Naive thymus-derived CD4-positive, alpha-beta T cell (primary cell): ENCODE measurements at regions of chr2 and their contacts with region 1.

Region 1: DNA sequence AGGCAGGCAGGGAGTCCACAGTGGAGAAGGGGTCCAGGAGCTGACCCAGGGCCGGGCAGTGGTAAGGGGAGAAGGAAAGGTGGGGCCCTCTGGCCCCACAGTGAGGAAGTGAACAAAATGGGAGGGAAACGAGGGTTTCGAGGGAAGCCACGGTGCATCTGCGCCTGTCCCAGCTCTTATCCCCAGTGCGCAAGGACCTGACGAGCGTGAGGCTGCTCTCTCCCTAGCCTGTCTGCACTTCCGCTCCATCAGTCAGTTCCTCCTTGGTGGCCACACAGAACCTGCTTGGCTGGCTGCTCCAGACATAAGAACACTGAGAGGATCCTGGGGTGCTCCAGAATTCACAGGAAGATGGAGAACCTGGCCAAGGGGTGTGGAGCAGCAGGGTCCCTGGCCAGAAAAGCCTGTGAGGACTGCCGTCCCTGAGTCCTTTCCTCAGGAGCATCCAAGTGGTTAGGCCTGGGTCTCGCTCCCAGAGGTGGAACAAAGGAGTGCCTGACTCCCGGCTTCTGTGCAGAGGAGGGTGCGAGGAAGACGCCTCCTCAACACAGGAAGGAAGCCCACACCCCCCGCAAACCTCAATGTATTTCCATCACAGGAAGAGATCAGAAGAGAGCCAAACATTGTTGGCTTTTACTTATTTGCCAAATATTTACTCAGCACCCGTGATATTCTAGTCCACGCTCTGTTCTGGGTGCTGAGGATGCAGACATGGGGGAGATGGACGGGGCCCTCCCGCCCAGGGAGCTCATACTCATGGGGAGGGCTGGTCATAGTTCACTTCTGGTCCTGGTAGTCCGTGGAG is 43.7 kb upstream of the SEMA4C start:
- DNase-seq: peak in 8 of 9 donors; percentile 55 to 78 (median 72)
- ATAC-seq: peak; percentile 85
- H3K4me3 ChIP-seq: peak overlapping the region; percentile 68
- H3K4me3 Mint-ChIP-seq: peak overlapping the region; percentile 79 to 94 (median 88)
- H3K27ac ChIP-seq: peak overlapping the region; percentile 61
- H3K27ac Mint-ChIP-seq: peak overlapping the region; percentile 90 to 100 (median 97)
- H3K4me1 ChIP-seq: peaks cover 33 to 38% of the 10 kb centered on the region in 2 donors
- H3K4me1 Mint-ChIP-seq: peaks cover 45 to 96% (median 89%) of the 10 kb centered on the region in 7 donors
- H3K27me3 ChIP-seq: no peaks in the 10 kb centered on the region
- H3K27me3 Mint-ChIP-seq: peaks cover 0 to 7% (median 0%) of the 10 kb centered on the region in 5 donors

Region 2: GRCh38 chr2:96449637-96450036 is 464.0 kb before region 1 on chr2:
- CTCF ChIA-PET with region 1: no interaction called
- POLR2A ChIA-PET with region 1: no interaction called
- intact Hi-C with region 1: no loop called
- DNase-seq: no peak
- ATAC-seq: no peak
- H3K4me3 ChIP-seq: no peak overlapping the region
- H3K4me3 Mint-ChIP-seq: no peak overlapping the region
- H3K27ac ChIP-seq: no peak overlapping the region
- H3K27ac Mint-ChIP-seq: no peak overlapping the region
- H3K4me1 ChIP-seq: no peaks in the 10 kb centered on the region
- H3K4me1 Mint-ChIP-seq: peaks cover 0 to 1% (median 0%) of the 10 kb centered on the region in 7 donors
- H3K27me3 ChIP-seq: no peaks in the 10 kb centered on the region
- H3K27me3 Mint-ChIP-seq: peaks cover 0 to 5% (median 0%) of the 10 kb centered on the region in 5 donors

Region 3: GRCh38 chr2:96868555-96869280 is 44.9 kb before region 1 on chr2:
- CTCF ChIA-PET with region 1: interaction called, 6 read pairs
- POLR2A ChIA-PET with region 1: interaction called, 76 read pairs
- intact Hi-C with region 1: loop called (anchors 1 kb)
- DNase-seq: peak in 8 of 9 donors; percentile 37 to 71 (median 56)
- ATAC-seq: peak; percentile 37
- H3K4me3 ChIP-seq: peak overlapping the region; percentile 81
- H3K4me3 Mint-ChIP-seq: peak overlapping the region; percentile 81 to 95 (median 88)
- H3K27ac ChIP-seq: peak overlapping the region; percentile 84
- H3K27ac Mint-ChIP-seq: peak overlapping the region in 8 of 9 donors; percentile 75 to 92 (median 85)
- H3K4me1 ChIP-seq: peaks cover 24 to 32% of the 10 kb centered on the region in 2 donors
- H3K4me1 Mint-ChIP-seq: peaks cover 23 to 52% (median 42%) of the 10 kb centered on the region in 7 donors
- H3K27me3 ChIP-seq: no peaks in the 10 kb centered on the region
- H3K27me3 Mint-ChIP-seq: peaks cover 0 to 12% (median 0%) of the 10 kb centered on the region in 5 donors

Region 4: GRCh38 chr2:96895726-96896651 is 17.6 kb before region 1 on chr2:
- CTCF ChIA-PET with region 1: interaction called, 4 read pairs
- POLR2A ChIA-PET with region 1: interaction called, 38 read pairs
- intact Hi-C with region 1: loop called in 1 of 2 experiments (anchors 2 kb)
- DNase-seq: no peak
- ATAC-seq: peak; percentile 41
- H3K4me3 ChIP-seq: no peak overlapping the region
- H3K4me3 Mint-ChIP-seq: peak overlapping the region in 7 of 10 donors; percentile 34 to 72 (median 52)
- H3K27ac ChIP-seq: no peak overlapping the region
- H3K27ac Mint-ChIP-seq: peak overlapping the region; percentile 56 to 88 (median 81)
- H3K4me1 ChIP-seq: peaks cover 24 to 47% of the 10 kb centered on the region in 2 donors
- H3K4me1 Mint-ChIP-seq: peaks cover 44 to 75% (median 68%) of the 10 kb centered on the region in 7 donors
- H3K27me3 ChIP-seq: no peaks in the 10 kb centered on the region
- H3K27me3 Mint-ChIP-seq: no peaks in the 10 kb centered on the region

Region 5: GRCh38 chr2:96940001-96940615 is 26.5 kb after region 1 on chr2:
- CTCF ChIA-PET with region 1: interaction called, 3 read pairs
- POLR2A ChIA-PET with region 1: interaction called, 54 read pairs
- intact Hi-C with region 1: loop called in 1 of 2 experiments (anchors 1 kb)
- DNase-seq: no peak
- ATAC-seq: no peak
- H3K4me3 ChIP-seq: no peak overlapping the region
- H3K4me3 Mint-ChIP-seq: peak overlapping the region in 8 of 10 donors; percentile 50 to 92 (median 78)
- H3K27ac ChIP-seq: no peak overlapping the region
- H3K27ac Mint-ChIP-seq: peak overlapping the region in 8 of 9 donors; percentile 43 to 94 (median 80)
- H3K4me1 ChIP-seq: peaks cover 19 to 25% of the 10 kb centered on the region in 2 donors
- H3K4me1 Mint-ChIP-seq: peaks cover 24 to 55% (median 46%) of the 10 kb centered on the region in 7 donors
- H3K27me3 ChIP-seq: no peaks in the 10 kb centered on the region
- H3K27me3 Mint-ChIP-seq: peaks cover 0 to 10% (median 0%) of the 10 kb centered on the region in 5 donors

Region 6: GRCh38 chr2:96951093-96951654 is 37.6 kb after region 1 on chr2:
- CTCF ChIA-PET with region 1: interaction called, 8 read pairs
- POLR2A ChIA-PET with region 1: interaction called, 13 read pairs
- intact Hi-C with region 1: loop called (anchors 1 to 5 kb)
- DNase-seq: peak; percentile 68 to 85 (median 80)
- ATAC-seq: peak; percentile 93
- H3K4me3 ChIP-seq: no peak overlapping the region
- H3K4me3 Mint-ChIP-seq: peak overlapping the region in 1 of 10 donors; percentile 61
- H3K27ac ChIP-seq: no peak overlapping the region
- H3K27ac Mint-ChIP-seq: peak overlapping the region in 6 of 9 donors; percentile 26 to 80 (median 61)
- H3K4me1 ChIP-seq: peaks cover 13 to 14% of the 10 kb centered on the region in 2 donors
- H3K4me1 Mint-ChIP-seq: peaks cover 14 to 40% (median 20%) of the 10 kb centered on the region in 7 donors
- H3K27me3 ChIP-seq: no peaks in the 10 kb centered on the region
- H3K27me3 Mint-ChIP-seq: peaks cover 0 to 2% (median 0%) of the 10 kb centered on the region in 5 donors